Naive thymus-derived CD4-positive, alpha-beta T cell (primary cell): ENCODE measurements at regions of chr2 and their contacts with region 1.

Region 1: DNA sequence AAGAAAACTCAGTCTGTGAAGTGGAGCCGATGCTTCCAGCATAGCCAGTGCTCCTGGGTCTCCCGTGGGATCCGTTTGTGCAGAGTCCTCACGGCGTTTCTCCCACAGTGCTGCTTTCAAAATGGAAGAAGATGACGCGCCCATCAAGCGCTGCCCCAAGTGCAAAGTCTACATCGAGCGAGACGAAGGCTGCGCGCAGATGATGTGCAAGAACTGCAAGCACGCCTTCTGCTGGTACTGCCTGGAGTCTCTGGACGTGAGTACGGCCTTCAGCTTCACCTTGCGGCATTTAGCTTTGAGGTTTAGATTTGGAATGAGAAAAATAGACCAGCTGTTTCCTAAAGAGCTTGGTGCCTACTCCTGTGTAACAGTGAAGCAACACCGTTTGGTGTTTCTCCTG is 107.0 kb downstream of the RNF144A start:
- DNase-seq: no peak
- ATAC-seq: no peak
- H3K4me3 ChIP-seq: no peak overlapping the region
- H3K4me3 Mint-ChIP-seq: no peak overlapping the region
- H3K27ac ChIP-seq: no peak overlapping the region
- H3K27ac Mint-ChIP-seq: peak overlapping the region in 1 of 9 donors; percentile 50
- H3K4me1 ChIP-seq: no peaks in the 10 kb centered on the region
- H3K4me1 Mint-ChIP-seq: peaks cover 4 to 16% (median 9%) of the 10 kb centered on the region in 7 donors
- H3K27me3 ChIP-seq: no peaks in the 10 kb centered on the region
- H3K27me3 Mint-ChIP-seq: no peaks in the 10 kb centered on the region

Region 2: GRCh38 chr2:7014174-7014640 is 10.1 kb before region 1 on chr2:
- CTCF ChIA-PET with region 1: interaction called, 5 read pairs
- POLR2A ChIA-PET with region 1: no interaction called
- intact Hi-C with region 1: loop called in 1 of 2 experiments (anchors 1 kb)
- DNase-seq: peak in 7 of 9 donors; percentile 14 to 51 (median 27)
- ATAC-seq: peak; percentile 83
- H3K4me3 ChIP-seq: no peak overlapping the region
- H3K4me3 Mint-ChIP-seq: peak overlapping the region in 1 of 10 donors; percentile 32
- H3K27ac ChIP-seq: no peak overlapping the region
- H3K27ac Mint-ChIP-seq: peak overlapping the region in 8 of 9 donors; percentile 19 to 82 (median 61)
- H3K4me1 ChIP-seq: peaks cover 0 to 6% of the 10 kb centered on the region in 2 donors
- H3K4me1 Mint-ChIP-seq: peaks cover 16 to 57% (median 44%) of the 10 kb centered on the region in 7 donors
- H3K27me3 ChIP-seq: no peaks in the 10 kb centered on the region
- H3K27me3 Mint-ChIP-seq: no peaks in the 10 kb centered on the region

Region 3: DNA sequence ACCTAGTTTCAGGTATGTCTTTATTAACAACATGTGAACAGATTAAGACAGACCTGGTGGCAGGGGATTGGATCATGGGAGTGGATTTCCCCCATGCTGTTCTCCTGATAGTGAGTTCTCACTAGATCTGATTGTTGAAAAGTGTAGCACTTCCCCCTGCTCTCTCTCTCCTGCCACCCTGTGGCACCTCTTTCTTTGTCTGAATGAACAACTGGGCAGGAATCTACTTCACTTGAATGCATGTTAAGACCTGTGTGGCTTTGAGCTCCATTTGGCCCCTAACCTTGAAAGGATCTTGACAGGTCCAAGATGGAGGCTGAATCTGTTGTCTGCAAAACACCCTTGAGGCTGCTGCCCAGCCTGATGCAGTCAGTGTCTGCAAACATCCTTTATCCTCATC is 87.4 kb after region 1 on chr2:
- CTCF ChIA-PET with region 1: no interaction called
- POLR2A ChIA-PET with region 1: no interaction called
- intact Hi-C with region 1: no loop called
- DNase-seq: no peak
- ATAC-seq: no peak
- H3K4me3 ChIP-seq: no peak overlapping the region
- H3K4me3 Mint-ChIP-seq: no peak overlapping the region
- H3K27ac ChIP-seq: no peak overlapping the region
- H3K27ac Mint-ChIP-seq: no peak overlapping the region
- H3K4me1 ChIP-seq: no peaks in the 10 kb centered on the region
- H3K4me1 Mint-ChIP-seq: peaks cover 0 to 5% (median 0%) of the 10 kb centered on the region in 7 donors
- H3K27me3 ChIP-seq: no peaks in the 10 kb centered on the region
- H3K27me3 Mint-ChIP-seq: peaks cover 0 to 4% (median 0%) of the 10 kb centered on the region in 5 donors